ENCODE measurements at regions of chr6 and their contacts with region 1.

Region 1: DNA sequence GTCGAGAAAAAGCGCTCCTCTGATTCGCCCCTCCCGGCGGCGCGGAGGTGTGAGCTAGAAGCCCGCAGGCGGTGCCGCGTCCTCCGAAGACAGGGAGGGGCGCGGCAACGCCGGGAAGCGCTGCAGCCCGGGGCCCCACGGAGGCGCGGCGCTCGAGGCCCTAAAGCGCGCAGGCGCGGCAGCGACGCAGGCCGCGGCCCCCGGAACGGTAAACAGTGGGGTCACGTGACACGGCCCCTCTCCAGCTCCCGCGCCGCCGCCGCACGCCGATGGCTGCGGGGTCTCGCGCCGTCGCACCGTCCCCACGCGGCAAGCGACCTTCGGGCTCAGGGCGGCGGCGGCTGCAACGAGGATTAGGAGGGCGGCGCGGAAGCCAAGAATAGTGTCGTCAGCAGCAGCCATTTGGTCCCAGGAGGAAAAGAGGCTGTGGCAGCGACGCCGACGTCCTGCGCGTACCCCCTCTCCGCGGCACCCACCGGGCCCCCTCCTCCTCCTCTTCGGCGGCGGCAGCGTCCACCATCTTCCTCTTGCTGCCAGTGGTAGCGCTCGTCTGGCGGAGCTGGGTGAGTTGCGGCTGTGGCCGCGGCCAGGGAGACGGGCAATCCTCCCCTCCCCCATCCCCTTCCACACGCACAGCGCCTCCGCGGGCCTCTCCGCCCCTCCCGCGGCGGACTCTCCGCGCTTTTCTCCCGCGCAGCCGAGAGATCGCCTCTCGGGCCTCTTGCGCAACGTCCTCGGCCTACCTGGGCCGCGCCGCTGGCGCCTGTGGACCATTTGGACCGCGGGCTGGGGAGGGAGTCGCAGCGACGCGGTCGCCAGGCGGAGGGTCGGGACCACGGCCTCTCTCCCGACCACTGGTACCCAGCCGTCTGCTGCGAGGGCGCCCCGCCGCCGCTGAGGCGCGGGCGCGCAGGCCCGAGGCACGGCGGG is at the start of gene PHF3:
- DNase-seq: peak; percentile 88 to 91
- ATAC-seq: peak; percentile 95 to 99 (median 96)
- H3K4me3 ChIP-seq: peak within 1 kb of the TSS; percentile 79 to 97 (median 88)
- H3K27ac ChIP-seq: peak within 1 kb of the TSS; percentile 87 to 99 (median 96)
- H3K4me1 ChIP-seq: peaks cover 3 to 47% (median 45%) of the 10 kb centered on the region in 9 donors
- H3K27me3 ChIP-seq: no peaks in the 10 kb centered on the region
- CTCF ChIP-seq: peak in 4 of 9 donors; percentile 3 to 39 (median 22)
- total RNA-seq, gene PHF3: 25.8 to 46.3 (median 41.0) TPM

Region 2: GRCh38 chr6:63571881-63572732 is 63.7 kb before region 1 on chr6 and contains the starts of genes LOC128125822 and PTP4A1:
- intact Hi-C with region 1: loop called in 6 of 10 experiments (anchors 1 to 10 kb)
- DNase-seq: peak; percentile 96 to 98
- ATAC-seq: peak; percentile 97 to 100 (median 98)
- H3K4me3 ChIP-seq: peak within 1 kb of the TSS; percentile 77 to 97 (median 94)
- H3K27ac ChIP-seq: peak within 1 kb of the TSS; percentile 95 to 100 (median 99)
- H3K4me1 ChIP-seq: peaks cover 0 to 39% (median 24%) of the 10 kb centered on the region in 9 donors
- H3K27me3 ChIP-seq: no peaks in the 10 kb centered on the region
- CTCF ChIP-seq: no peak
- total RNA-seq, gene PTP4A1: 30.0 to 69.9 (median 51.3) TPM

Region 3: DNA sequence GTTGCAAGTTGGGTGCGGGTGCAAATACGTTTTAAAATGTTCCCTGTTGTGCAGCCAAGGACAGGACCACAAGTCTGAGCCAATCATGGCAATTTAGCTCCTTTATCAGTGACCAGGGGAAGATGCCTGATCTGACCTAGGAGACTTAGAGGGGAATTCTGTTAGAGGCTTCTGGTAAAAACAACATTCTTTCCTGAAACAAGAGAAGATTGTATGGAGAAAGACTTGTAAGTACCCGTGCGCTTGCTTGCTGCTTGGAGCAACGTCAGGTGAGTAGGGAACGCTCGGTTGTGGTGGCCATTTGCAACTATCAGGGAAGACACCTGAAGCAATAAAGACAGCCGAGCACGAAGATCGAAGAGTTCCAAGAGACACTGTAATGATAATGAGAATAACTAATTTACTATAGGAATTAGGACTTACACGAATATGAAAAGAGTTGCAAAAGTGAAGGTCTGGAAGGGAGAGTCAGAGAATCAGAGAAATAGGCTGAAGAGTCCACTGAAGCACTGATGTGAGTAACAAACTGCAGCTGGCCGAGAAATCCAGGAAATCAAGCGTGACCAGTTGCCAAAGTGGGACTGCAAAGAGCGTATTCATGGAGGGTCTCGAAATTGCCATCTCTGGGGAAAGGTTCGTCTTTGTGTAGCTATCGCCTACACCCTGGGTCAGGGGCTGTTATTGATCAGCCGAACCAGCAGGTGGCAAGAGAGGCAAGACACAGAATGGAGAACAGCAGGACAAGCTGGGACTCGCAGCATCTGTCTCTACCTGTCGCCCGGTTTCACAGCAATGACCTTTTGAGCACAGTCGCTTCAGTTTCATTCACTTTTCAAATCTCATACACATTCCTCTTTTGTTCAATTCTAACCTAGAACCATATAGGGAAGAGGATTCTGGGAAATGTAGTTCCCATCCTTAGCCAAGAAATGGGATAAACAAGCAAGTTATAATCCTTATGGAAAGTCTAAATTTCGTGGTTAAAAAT is 37.5 kb before region 1 on chr6:
- intact Hi-C with region 1: loop called in 1 of 10 experiments (anchors 5 kb)
- DNase-seq: peak; percentile 49 to 63
- ATAC-seq: peak; percentile 86 to 98 (median 94)
- H3K4me3 ChIP-seq: peak overlapping the region; percentile 30 to 61 (median 56)
- H3K27ac ChIP-seq: peak overlapping the region in 1 of 10 donors; percentile 16
- H3K4me1 ChIP-seq: peaks cover 0 to 16% (median 6%) of the 10 kb centered on the region in 9 donors
- H3K27me3 ChIP-seq: peaks cover 0 to 8% (median 0%) of the 10 kb centered on the region in 7 donors
- CTCF ChIP-seq: peak; percentile 68 to 90 (median 85)

Region 4: DNA sequence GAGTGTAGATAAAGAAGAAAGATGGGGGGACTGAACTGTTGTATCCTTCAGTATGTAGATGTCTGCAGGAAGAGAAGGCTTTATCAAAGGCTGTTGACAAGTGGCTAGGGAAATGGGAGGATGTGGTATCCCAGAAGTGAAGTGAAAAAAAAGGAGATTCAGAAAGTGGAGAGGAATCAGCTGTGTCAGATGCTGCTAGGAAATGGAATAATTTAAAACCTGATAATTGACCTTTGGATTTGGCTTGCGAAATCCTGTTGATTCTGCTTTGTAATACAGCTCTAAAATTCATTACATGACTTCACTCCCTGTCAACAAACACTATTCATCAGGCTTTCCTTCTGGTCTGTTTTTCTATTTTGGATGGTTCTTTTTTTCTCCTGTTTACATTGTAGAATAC is 41.4 kb after region 1 on chr6:
- intact Hi-C with region 1: loop called in 4 of 10 experiments (anchors 5 to 10 kb)
- DNase-seq: no peak
- ATAC-seq: peak in 3 of 8 donors; percentile 16 to 66 (median 24)
- H3K4me3 ChIP-seq: no peak overlapping the region
- H3K27ac ChIP-seq: peak overlapping the region in 1 of 10 donors; percentile 0
- H3K4me1 ChIP-seq: peaks cover 0 to 70% (median 39%) of the 10 kb centered on the region in 9 donors
- H3K27me3 ChIP-seq: no peaks in the 10 kb centered on the region
- CTCF ChIP-seq: no peak

Region 5: DNA sequence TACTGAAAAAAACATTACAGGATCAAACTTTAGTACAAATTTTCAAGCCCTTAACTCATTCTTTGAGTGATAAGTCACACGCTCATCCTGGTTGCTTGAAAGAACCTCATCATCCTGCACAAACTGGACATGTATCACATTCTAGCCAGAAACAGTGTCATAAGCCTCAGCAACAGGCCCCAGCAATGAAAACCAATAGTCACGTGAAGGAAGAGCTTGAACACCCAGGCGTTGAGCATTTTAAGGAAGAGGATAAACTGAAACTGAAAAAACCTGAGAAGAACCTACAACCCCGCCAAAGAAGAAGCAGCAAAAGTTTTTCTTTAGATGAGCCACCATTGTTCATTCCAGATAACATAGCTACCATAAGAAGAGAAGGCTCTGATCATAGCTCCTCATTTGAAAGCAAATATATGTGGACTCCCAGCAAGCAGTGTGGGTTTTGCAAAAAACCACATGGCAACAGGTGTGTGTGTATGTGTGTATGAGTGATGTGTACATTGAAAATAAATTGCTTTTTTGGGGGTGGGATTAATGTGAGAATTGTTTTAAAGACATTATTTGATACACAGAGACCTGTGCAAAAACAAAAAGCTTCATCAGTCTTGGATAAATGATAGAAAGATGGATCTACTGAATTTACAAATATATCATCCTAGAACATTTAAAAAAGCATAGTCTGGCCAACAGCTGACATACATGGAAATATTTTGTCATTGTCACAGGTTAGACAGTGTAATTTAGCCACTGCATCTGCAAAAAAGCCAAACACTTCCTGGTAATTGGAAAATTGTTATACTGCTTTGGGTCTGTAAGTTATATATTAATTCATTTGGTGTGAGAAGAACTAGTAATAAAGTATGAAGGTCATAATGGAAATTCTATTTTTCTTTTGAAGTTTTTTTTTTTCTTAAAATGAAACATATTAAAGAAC is 49.9 kb after region 1 on chr6:
- intact Hi-C with region 1: loop called in 4 of 10 experiments (anchors 10 kb)
- DNase-seq: no peak
- ATAC-seq: no peak
- H3K4me3 ChIP-seq: no peak overlapping the region
- H3K27ac ChIP-seq: peak overlapping the region in 1 of 10 donors; percentile 11
- H3K4me1 ChIP-seq: peaks cover 0 to 43% (median 4%) of the 10 kb centered on the region in 9 donors
- H3K27me3 ChIP-seq: no peaks in the 10 kb centered on the region
- CTCF ChIP-seq: no peak

Region 6: DNA sequence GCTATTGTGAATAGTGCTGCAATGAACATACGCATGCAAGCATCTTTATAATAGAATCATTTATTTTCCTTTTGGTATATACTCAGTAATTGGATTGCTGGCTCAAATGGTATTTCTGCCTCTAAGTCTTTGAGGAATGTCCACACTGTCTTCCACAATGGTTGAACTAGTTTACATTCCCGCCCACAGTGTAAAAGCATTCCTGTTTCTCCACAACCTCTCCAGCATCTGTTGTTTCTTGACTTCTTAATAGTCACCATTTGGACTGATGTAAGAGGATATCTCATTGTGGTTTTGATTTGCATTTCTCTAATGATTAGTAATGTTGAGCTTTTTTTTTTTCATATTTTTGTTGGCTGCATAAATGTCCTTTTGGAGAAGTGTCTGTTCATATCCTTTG is 208.4 kb after region 1 on chr6:
- intact Hi-C with region 1: no loop called
- DNase-seq: no peak
- ATAC-seq: no peak
- H3K4me3 ChIP-seq: no peak overlapping the region
- H3K27ac ChIP-seq: no peak overlapping the region
- H3K4me1 ChIP-seq: no peaks in the 10 kb centered on the region
- H3K27me3 ChIP-seq: no peaks in the 10 kb centered on the region
- CTCF ChIP-seq: no peak